ENCODE measurements at regions of chr17 and their contacts with region 1.

Region 1: GRCh38 chr17:17890773-17891759 is 54.3 kb upstream of the SREBF1 start:
- DNase-seq: peak; percentile 73
- H3K27ac ChIP-seq: peak overlapping the region; percentile 33
- CTCF ChIP-seq: peak; percentile 80

Region 2: GRCh38 chr17:17792551-17793377 is 98.3 kb before region 1 on chr17:
- CTCF ChIA-PET with region 1: no interaction called
- POLR2A ChIA-PET with region 1: no interaction called
- DNase-seq: no peak
- H3K27ac ChIP-seq: peak overlapping the region; percentile 74
- CTCF ChIP-seq: no peak

Region 3: DNA sequence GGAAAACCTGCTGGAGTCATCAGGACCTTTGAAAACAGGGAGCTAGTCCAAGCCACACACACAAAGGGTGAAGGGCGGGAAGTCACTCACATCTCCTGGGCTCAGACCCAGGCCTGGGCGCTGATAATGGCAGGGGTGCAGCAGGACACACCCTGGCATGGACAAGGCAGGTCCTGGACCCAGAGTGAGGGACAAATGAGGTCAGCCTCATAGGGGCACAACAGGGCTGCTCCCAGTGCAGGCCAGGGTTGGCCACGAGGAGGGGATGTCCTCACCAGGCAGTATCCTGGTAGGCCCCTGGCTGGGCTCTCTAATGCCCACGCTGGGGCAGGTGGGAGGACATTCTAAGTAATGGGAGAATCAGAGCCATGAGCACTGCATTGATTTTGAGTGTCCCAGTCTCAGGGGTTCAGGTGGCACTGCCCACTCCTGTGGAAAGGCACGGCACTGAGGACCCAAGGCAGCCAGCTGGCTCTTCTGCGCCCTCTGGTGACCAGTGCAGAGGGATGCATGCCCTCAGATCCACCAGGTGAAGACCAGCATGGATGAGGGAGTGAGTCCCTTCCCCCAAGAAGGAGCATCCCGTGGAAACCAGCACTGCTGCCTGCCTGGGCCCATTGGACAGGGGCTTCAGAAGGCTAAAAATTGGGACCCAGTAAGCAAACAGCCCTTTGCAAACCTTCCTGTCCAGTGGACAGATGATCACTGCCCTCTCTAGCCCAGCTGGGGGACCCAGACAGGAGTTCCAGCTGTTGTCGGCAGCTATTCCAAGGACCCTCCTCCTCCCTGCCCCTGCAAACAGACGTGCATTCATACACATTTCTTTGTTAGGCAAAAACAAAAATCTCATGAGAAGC is 30.9 kb before region 1 on chr17:
- CTCF ChIA-PET with region 1: no interaction called
- POLR2A ChIA-PET with region 1: no interaction called
- DNase-seq: peak; percentile 74
- H3K27ac ChIP-seq: peak overlapping the region; percentile 60
- CTCF ChIP-seq: peak; percentile 94

Region 4: DNA sequence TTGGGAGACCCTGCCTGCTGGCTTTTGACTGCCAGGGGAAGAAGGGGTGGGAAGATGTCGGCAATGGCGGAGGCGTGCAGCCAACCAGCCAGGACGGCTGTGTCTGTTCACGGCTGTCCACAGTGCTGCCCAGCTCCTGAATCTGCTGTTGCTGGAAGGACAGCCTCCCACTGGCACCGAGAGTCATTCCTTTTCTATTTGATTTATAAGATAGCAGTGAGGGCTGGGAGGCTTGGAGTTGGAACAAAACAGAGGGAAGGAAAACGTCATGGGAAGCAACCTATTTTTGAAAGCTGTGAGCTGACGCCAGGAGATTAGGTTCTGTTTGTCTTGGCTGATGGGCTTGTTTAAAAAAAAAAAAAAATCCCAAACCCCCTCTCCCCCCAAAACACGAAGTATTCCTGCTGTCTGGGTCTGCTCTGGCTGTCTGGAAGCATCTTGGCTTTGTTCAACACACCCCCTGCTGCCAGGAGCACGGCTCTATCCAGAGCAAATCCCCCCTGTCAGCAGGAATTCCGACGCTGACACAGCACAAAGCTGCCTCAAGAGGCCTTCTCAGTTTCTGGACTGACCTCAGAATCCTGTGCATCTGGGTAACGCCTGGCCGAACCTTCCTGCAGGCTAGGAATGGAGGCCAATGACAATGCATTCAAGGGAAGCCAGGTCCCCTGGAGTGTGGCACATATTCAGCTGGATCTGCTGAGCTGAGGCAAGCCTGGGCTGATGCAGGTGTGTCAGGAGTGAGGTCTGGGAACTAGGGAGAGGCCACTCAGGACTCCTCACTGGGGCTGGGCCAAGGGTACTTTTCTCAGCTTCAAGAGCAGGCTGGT is 13.3 kb before region 1 on chr17:
- CTCF ChIA-PET with region 1: no interaction called
- POLR2A ChIA-PET with region 1: no interaction called
- DNase-seq: no peak
- H3K27ac ChIP-seq: peak overlapping the region; percentile 75
- CTCF ChIP-seq: no peak

Region 5: DNA sequence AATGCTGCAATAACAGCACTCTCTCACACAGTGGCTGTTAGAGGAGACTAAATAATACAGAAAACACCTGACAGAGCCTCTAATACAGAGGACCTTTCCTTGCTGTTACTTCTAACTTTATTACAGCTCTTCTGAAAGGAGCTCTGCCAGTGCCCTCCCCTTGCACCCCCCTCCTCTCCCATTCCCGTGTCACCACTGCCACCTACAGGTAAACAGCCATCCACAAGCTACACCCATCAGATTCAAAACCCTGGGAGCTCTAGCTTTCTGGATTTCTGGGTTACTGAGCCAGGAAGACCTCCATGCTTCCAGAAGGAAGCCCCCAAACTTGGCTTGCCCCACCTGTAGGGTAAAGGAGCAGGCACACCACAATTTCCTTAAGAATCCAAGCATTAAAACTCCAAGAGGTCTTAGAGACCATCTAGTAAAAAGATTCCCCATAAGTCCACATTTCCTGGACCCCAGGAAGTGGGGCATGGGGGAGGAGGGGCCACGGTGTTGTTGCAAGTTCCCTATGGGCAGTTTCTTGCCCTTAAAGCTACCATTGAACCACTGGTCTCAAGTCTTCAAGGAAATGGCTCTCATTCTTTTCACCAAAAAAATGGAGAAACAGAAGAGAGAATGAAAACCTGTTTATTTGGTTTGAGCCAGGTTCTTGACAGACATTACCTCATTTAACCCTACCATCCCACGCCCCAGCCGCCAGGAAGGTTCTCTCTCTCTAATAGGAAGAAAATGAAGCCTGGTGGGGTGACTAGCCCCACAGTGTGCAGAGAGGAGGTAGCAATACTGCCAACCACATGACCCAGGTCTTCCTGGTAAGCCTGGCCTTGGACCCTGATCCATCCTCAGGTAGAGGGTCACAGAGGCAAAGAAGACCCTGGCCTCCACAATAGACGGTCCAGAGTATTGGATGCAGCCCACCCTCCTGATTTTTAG is 28.4 kb after region 1 on chr17:
- CTCF ChIA-PET with region 1: interaction called, 32 read pairs
- POLR2A ChIA-PET with region 1: no interaction called
- DNase-seq: peak; percentile 76
- H3K27ac ChIP-seq: peak overlapping the region; percentile 90
- CTCF ChIP-seq: peak; percentile 80

Region 6: GRCh38 chr17:17985555-17985954 is 94.5 kb after region 1 on chr17:
- CTCF ChIA-PET with region 1: no interaction called
- POLR2A ChIA-PET with region 1: no interaction called
- DNase-seq: no peak
- H3K27ac ChIP-seq: no peak overlapping the region; the same call in 1 of the 2 replicates
- CTCF ChIP-seq: no peak

Region 7: DNA sequence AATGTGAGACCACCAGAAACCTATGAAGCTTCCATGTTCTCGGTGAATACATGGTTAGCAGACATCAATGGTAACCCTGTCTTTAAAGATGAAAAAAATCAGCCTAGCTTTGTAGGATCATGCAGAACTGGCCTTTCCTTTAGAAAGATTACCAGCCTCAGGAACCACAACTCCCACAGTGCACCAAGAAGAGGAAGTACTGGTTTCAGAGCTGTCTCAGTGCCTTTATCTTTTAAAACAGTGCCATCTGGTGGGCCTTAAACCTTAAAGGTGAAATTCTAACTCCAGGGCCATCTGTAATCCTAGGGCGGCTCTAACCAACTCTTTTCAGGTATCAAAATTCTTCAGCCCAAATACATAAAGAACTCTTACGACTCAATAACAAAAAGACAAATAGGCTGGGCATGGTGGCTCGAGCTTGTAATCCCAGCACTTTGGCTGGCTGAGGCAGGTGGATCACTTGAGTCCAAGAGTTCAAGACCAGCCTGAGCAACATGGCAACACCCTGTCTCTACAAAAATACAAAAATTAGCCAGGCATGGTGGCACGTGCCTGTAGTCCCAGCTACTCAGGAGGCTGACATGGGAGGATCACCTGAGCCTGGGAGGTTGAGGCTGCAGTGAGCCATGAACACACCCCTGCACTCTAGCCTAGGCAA is 142.5 kb after region 1 on chr17:
- CTCF ChIA-PET with region 1: interaction called, 17 read pairs
- POLR2A ChIA-PET with region 1: interaction called, 5 read pairs
- DNase-seq: peak; percentile 76
- H3K27ac ChIP-seq: peak overlapping the region; percentile 33; the same call in 1 of the 2 replicates
- CTCF ChIP-seq: peak; percentile 48

Measured in RWPE1 (cell line).